ENCODE measurements at regions of chr10 and their contacts with region 1.

Region 1: DNA sequence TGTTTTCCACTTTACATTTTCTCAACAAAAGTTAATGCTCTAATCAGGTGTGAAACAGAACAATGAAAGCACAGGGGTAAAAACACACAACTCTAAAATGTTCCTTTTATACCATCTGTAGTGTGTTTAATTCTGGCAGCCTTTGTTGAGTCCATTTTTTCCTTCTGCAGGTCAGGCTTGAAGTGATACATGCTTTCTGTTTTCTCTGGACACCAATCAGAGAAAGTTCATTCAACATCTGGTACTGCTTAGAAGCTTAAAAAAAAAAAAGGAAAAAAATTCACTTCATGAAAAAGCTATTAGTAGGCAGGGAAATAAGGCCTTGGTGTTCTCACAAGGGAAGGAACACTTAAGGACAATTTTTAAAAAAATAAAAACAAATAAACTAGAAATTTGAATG is 231.3 kb upstream of the RHOBTB1 start:
- DNase-seq: peak; percentile 12
- H3K4me3 ChIP-seq: no peak overlapping the region
- CTCF ChIP-seq: no peak

Region 2: DNA sequence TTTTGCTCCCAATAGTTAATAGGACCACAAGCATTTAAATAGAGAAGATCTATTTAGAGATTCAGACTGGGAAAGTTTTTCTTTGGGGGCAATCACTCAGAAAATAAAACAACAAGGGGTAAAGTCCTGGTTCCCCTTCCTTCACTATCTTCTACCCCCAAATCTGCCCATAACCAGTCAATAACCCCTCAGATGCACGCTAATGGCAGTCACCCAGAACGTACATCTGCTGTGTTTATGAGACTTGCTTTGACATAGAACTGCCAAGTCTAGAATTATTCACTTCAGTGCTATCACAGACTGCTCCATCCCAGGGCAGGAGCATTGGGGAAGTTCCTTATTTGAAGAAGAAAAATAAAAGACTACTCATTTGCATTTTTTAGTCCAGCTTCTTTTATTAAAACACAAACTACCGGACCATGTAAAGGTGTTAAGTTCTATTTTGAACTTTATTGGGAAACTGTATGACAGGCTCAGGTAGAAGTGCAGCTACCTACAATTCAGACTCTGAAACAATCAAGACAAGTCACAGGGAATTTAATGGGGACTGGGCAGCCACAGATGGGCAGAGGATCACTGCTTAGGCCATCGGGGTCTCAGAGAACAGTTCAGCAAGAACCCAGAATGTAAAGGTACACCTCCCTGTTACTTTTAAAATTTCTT is 824.0 kb before region 1 on chr10:
- CTCF ChIA-PET with region 1: no interaction called
- POLR2A ChIA-PET with region 1: no interaction called
- DNase-seq: no peak
- H3K4me3 ChIP-seq: no peak overlapping the region
- CTCF ChIP-seq: no peak

Region 3: DNA sequence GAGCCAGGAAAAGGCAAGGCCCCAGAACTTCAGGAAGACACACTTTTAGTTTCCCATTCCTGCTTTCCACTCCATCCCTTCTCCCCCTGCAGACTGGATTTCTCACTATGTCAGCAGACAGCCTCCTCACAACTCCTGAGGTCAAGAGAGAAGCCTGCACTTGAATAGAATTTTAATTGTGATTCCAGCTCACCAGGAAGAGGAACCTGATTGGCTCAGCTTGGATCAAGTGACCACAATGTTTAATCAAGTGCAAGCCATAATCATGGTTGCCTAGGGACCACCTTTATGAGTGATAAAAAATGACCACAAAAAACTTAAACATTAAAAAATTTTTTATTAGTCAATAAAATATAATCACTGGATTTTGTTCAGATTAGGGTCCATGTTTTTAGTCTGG is 13.4 kb after region 1 on chr10:
- CTCF ChIA-PET with region 1: interaction called, 22 read pairs
- POLR2A ChIA-PET with region 1: no interaction called
- DNase-seq: no peak
- H3K4me3 ChIP-seq: no peak overlapping the region
- CTCF ChIP-seq: no peak

Region 4: DNA sequence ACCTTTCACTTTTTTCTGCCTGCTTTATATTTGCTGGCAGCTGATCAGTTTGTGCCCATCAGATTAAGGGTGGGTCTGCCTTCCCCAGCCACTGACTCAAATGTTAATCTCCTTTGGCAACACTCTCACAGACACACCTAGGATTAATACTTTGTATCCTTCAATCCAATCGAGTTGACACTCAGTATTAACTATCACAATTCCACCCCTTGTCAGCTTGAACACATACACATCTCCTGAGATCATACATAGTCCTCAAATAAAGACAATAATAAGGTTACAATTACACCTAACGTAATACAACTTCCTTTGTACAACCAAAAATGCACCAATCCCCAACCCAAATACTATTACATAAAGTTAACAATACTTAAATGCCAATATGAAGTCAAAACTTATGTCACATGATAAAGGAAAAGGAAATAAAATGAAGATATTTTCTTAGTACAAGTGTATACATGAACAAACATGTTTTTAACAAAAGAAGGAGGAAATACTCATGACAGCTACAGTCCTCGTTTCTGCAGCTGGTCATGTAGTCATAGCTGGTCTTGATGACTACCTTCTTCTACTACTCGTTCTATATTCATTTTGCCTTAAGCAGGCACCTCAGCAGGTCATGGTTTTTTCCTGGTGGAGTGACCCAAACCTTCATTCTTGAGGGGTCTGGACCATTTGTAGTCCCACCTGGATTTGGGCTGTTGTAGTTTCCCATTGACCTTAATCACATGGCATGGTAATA is 390.7 kb after region 1 on chr10:
- CTCF ChIA-PET with region 1: no interaction called
- POLR2A ChIA-PET with region 1: no interaction called
- DNase-seq: no peak
- H3K4me3 ChIP-seq: no peak overlapping the region
- CTCF ChIP-seq: no peak